Adrenal gland (tissue), 19 donors: ENCODE measurements at regions of chr6 and their contacts with region 1.

Region 1: GRCh38 chr6:37207903-37208456 is 38.0 kb downstream of the PIM1 start:
- DNase-seq: peak; percentile 75 to 96 (median 87)
- H3K4me3 ChIP-seq: no peak overlapping the region
- H3K27ac ChIP-seq: no peak overlapping the region
- H3K4me1 ChIP-seq: peaks cover 0 to 9% of the 10 kb centered on the region in 2 donors
- H3K27me3 ChIP-seq: no peaks in the 10 kb centered on the region
- CTCF ChIP-seq: peak; percentile 60 to 92 (median 77)
- POLR2A ChIP-seq: no peak

Region 2: GRCh38 chr6:37018198-37019064 is 189.5 kb before region 1 on chr6:
- intact Hi-C with region 1: loop called (anchors 2 to 10 kb)
- DNase-seq: peak; percentile 91 to 98 (median 94)
- H3K4me3 ChIP-seq: no peak overlapping the region
- H3K27ac ChIP-seq: peak overlapping the region in 1 of 5 donors; percentile 56
- H3K4me1 ChIP-seq: peaks cover 0 to 15% of the 10 kb centered on the region in 2 donors
- H3K27me3 ChIP-seq: no peaks in the 10 kb centered on the region
- CTCF ChIP-seq: peak; percentile 78 to 96 (median 90)
- POLR2A ChIP-seq: no peak

Region 3: DNA sequence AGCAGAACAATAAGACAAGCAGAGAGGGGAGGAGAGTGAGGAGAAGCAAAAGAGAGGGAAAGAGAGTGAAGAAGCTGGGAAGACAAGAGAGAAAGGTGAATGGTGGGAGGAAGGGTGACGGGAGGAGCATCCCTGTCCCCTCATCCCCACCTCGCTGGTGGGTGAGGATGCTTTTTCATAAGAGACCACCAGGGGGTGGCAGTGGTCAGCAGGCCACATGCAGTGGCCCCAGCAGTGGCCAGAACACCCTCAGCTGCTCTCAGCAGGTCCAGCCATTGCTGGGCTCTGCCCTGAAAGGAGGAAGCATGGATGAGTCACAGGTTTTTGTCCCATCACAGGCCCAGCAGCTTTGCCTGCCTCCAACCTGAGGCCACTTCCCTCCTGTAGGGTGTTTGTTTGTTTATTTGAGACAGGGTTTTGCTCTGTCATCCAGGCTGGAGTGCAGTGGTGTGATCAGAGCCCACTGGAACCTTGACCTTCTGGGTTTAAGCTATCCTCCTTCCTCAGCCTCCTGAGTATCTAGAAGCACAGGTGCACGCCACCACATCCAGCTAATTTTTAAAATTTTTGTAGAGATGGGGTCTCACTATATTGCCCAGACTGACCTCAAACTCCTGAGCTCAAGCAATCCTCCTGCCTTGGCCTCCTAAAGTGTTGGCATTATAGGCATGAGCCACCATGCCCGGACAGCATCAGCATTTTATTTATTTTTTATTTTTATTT is 178.6 kb before region 1 on chr6:
- intact Hi-C with region 1: loop called in 1 of 2 experiments (anchors 10 kb)
- DNase-seq: peak; percentile 67 to 90 (median 85)
- H3K4me3 ChIP-seq: no peak overlapping the region
- H3K27ac ChIP-seq: no peak overlapping the region
- H3K4me1 ChIP-seq: no peaks in the 10 kb centered on the region
- H3K27me3 ChIP-seq: no peaks in the 10 kb centered on the region
- CTCF ChIP-seq: peak; percentile 50 to 90 (median 80)
- POLR2A ChIP-seq: no peak